ENCODE measurements at regions of chr3 and their contacts with region 1.

Region 1: DNA sequence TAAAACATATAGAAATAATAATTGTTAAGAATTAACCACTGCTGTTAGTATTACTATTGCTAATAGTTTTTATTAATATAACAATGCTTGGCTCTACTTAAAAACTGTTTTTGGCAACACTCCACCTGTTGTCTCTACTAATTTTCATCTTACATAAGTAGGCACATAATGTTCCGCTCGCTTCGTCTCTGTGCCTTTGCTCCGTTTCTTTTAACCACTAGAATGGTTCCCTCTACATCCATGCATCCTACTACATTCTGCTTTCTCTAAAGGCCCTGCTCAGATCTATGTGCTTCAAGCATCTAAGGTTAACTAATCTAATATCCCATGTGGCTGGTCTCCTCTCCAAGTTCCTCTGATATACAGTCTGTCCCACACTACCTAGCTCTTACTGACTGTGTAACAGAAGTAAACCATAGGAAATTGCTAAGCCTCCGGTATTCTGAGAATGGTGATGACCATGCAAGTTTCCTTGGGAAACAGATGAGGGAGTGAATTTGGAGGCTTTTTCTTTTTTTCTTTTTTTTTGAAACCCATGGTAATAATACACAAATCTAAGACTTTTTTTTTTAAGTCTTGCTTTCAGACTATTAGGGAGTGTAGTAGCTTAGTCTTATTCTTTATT is 138.3 kb downstream of the P3H2 start:
- DNase-seq: peak; percentile 26 to 66 (median 60)
- H3K4me3 ChIP-seq: no peak overlapping the region
- H3K27ac ChIP-seq: no peak overlapping the region
- H3K4me1 ChIP-seq: peaks cover 0 to 29% (median 14%) of the 10 kb centered on the region in 4 experiments
- H3K27me3 ChIP-seq: no peaks in the 10 kb centered on the region

Region 2: GRCh38 chr3:189739378-189739777 is 243.1 kb before region 1 on chr3:
- CTCF ChIA-PET with region 1: no interaction called
- POLR2A ChIA-PET with region 1: no interaction called
- DNase-seq: no peak
- H3K4me3 ChIP-seq: no peak overlapping the region
- H3K27ac ChIP-seq: no peak overlapping the region
- H3K4me1 ChIP-seq: no peaks in the 10 kb centered on the region
- H3K27me3 ChIP-seq: no peaks in the 10 kb centered on the region

Region 3: DNA sequence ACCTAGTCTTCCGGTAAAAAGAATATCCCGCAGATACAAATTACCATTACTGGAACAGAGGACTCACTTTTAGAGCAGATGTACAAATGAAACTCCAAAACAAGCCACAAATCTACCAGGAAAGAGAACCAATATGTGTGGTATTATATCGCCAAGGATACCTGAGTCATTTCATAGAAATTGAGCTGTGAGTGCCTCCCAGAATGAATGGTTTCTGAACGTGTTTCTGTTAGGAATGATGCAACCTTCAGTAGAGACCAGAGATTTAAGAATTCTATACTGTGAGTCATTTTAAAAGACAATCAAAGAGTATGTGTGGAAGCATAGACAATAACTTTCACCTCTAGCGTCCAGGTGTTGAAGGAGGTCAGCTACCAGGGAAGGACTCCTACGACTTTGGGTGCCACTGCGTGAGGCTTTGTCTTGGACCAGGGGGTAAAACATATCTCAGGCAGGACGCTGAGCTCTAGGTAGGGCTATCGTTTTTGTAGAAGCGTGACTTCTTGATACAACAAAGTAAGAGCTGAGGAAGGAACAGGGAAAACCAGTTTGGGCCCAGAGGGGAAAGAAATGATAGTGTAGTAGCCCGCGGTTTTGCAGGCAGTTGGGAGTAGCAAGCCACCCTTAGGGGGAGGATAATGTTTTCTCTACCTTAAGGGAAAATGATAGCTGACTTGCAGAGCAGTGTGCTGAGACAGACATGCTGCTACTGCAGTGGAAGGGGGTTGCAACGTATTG is 140.8 kb before region 1 on chr3:
- CTCF ChIA-PET with region 1: no interaction called
- POLR2A ChIA-PET with region 1: no interaction called
- DNase-seq: no peak
- H3K4me3 ChIP-seq: no peak overlapping the region
- H3K27ac ChIP-seq: no peak overlapping the region
- H3K4me1 ChIP-seq: no peaks in the 10 kb centered on the region
- H3K27me3 ChIP-seq: no peaks in the 10 kb centered on the region

Region 4: GRCh38 chr3:190048932-190049441 is 66.6 kb after region 1 on chr3:
- CTCF ChIA-PET with region 1: no interaction called
- POLR2A ChIA-PET with region 1: interaction called, 10 read pairs
- DNase-seq: peak in 1 of 3 donors; percentile 12
- H3K4me3 ChIP-seq: peak overlapping the region in 1 of 7 experiments; percentile 24
- H3K27ac ChIP-seq: no peak overlapping the region
- H3K4me1 ChIP-seq: no peaks in the 10 kb centered on the region
- H3K27me3 ChIP-seq: no peaks in the 10 kb centered on the region